ENCODE measurements at regions of chr17 and their contacts with region 1.

Region 1: DNA sequence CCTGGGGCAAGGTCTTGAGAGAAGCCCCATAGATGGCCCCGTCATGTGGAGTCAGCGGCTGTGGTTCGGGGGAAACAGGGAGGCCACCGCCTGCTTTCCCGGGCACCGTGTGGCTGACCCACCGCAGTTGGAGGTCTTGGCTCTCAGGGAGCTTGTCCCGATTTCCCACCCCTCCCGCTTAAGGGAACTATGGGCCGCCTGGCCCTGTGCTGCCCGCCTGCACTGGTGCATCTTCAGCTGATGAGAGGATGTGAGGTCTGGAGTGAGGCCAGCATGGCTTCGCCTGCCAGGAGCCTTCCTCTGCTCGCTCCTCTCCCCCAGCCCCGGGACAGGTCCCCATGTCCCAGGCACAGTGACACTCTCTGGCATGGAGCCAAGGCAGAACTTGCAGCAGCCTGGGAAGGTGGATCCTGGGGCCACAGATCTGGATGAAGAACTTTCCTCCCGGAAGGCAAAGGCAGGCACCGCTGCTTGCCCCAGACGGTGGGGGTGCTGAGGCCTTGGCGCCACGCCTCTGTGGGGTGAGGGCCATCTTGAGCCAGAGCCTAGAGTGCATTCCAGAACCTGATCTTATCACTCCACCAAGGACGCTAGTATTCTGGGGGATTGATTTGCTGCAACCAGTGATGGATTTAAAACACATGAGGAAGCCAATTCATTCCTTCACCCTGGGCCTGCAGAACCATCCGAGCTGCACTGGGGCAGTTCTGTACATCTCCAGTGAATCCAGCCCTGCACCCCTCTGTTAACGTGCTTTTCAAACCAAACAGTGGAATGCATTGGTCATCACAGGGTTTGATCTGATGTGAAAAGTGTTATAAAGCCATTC is 178.6 kb upstream of the TNRC6C start:
- DNase-seq: peak in 4 of 5 donors; percentile 36 to 69 (median 45)
- ATAC-seq: peak; percentile 24 to 60 (median 48)
- H3K4me3 ChIP-seq: peak overlapping the region in 5 of 12 donors; percentile 16 to 36 (median 22)
- H3K27ac ChIP-seq: peak overlapping the region in 11 of 12 donors; percentile 22 to 85 (median 71)
- H3K4me1 ChIP-seq: peaks cover 0 to 29% (median 21%) of the 10 kb centered on the region in 12 donors
- H3K27me3 ChIP-seq: no peaks in the 10 kb centered on the region
- CTCF ChIP-seq: no peak
- POLR2A ChIP-seq: no peak

Region 2: GRCh38 chr17:77542551-77543490 is 237.1 kb before region 1 on chr17:
- intact Hi-C with region 1: no loop called
- DNase-seq: peak; percentile 74 to 87 (median 81)
- ATAC-seq: peak; percentile 84 to 95 (median 92)
- H3K4me3 ChIP-seq: peak overlapping the region in 1 of 12 donors; percentile 4
- H3K27ac ChIP-seq: peak overlapping the region in 11 of 12 donors; percentile 27 to 89 (median 61)
- H3K4me1 ChIP-seq: peaks cover 0 to 29% (median 12%) of the 10 kb centered on the region in 12 donors
- H3K27me3 ChIP-seq: no peaks in the 10 kb centered on the region
- CTCF ChIP-seq: peak; percentile 83 to 98 (median 92)
- POLR2A ChIP-seq: no peak

Region 3: GRCh38 chr17:77814091-77814772 is 34.3 kb after region 1 on chr17:
- intact Hi-C with region 1: no loop called
- DNase-seq: no peak
- ATAC-seq: no peak
- H3K4me3 ChIP-seq: no peak overlapping the region
- H3K27ac ChIP-seq: no peak overlapping the region
- H3K4me1 ChIP-seq: peaks cover 8 to 25% (median 20%) of the 10 kb centered on the region in 12 donors
- H3K27me3 ChIP-seq: no peaks in the 10 kb centered on the region
- CTCF ChIP-seq: no peak
- POLR2A ChIP-seq: no peak

Region 4: GRCh38 chr17:77887464-77888241 is 107.7 kb after region 1 on chr17:
- intact Hi-C with region 1: loop called in 3 of 10 experiments (anchors 10 kb)
- DNase-seq: peak; percentile 80 to 91 (median 91)
- ATAC-seq: peak; percentile 71 to 92 (median 90)
- H3K4me3 ChIP-seq: peak overlapping the region; percentile 3 to 65 (median 56)
- H3K27ac ChIP-seq: peak overlapping the region; percentile 18 to 79 (median 65)
- H3K4me1 ChIP-seq: peaks cover 0 to 36% (median 20%) of the 10 kb centered on the region in 12 donors
- H3K27me3 ChIP-seq: no peaks in the 10 kb centered on the region
- CTCF ChIP-seq: no peak
- POLR2A ChIP-seq: peak in 1 of 2 donors; percentile 40